ENCODE measurements at regions of chr10 and their contacts with region 1.

Region 1: DNA sequence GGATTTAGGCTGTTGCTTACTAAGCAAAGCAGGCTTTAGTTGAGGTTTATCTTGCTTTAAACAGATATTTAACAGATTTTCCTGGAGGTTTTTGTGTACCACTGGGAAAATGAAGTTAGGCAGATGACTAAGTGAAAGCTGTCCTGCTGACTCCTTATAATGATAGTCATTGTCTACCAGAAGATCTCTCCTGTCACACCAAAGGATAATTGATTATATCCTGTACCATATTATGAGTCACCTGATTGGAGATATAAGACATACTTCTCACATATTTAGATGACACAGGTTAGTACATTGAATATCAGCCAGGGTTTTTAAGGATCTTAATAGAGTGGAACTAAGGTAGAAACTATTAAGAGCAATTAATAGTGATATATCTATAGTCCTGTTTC is 68.4 kb downstream of the PTEN start:
- DNase-seq: no peak
- H3K4me3 Mint-ChIP-seq: no peak overlapping the region
- H3K27ac Mint-ChIP-seq: no peak overlapping the region
- H3K4me1 Mint-ChIP-seq: peaks cover 46% of the 10 kb centered on the region
- H3K27me3 Mint-ChIP-seq: no peaks in the 10 kb centered on the region

Region 2: GRCh38 chr10:87942884-87943527 is 11.2 kb after region 1 on chr10:
- CTCF ChIA-PET with region 1: interaction called, 3 read pairs
- intact Hi-C with region 1: loop called (anchors 1 kb)
- DNase-seq: no peak
- H3K4me3 Mint-ChIP-seq: no peak overlapping the region
- H3K27ac Mint-ChIP-seq: no peak overlapping the region
- H3K4me1 Mint-ChIP-seq: peaks cover 15% of the 10 kb centered on the region
- H3K27me3 Mint-ChIP-seq: no peaks in the 10 kb centered on the region